PC-3 (cell line): ENCODE measurements at regions of chr14 and their contacts with region 1.

Region 1: DNA sequence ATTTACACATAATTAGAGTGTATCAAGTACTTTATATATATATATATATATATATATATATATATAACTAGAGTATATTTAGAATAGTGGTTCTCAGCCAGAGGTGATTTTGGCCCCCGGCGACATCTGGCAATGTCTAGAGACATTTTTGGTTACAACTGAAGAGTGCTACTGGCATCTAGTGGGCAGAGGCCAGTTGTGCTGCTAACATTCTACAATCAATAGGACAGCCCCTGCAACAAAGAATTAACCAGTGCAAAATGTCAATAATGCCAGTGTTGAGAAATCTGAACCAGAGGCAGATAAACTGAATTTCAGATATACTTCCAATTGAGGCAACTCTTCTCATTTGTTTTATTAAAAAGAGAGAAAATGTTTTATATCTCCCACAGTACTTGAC is 8.9 kb downstream of the GTF2A1 start:
- DNase-seq: peak; percentile 38
- ATAC-seq: 0 out of 2 replicates have a peak, but pooled peaks have one; percentile 58
- H3K4me3 ChIP-seq: no peak overlapping the region
- H3K27ac ChIP-seq: no peak overlapping the region
- H3K4me1 ChIP-seq: no peaks in the 10 kb centered on the region
- H3K27me3 ChIP-seq: no peaks in the 10 kb centered on the region
- CTCF ChIP-seq: peak; percentile 59

Region 2: DNA sequence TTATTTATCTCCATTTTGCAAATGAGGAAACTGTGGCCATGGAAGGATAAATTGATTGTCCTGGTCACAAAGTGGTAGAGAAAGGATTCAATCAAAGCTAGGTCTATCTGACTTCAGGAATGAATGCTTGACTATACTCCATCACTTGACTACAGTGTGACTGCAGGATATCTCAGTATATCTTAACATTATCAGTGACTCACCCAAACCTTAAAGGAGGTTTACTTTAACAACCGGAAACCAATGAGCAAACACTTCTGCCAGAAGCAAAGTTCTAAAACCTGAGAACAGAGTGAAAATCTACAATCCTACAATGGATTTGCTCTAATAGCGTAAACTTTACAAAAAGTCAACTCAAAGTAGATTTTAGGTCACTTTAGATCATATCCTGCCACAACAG is 547.3 kb before region 1 on chr14:
- CTCF ChIA-PET with region 1: no interaction called
- POLR2A ChIA-PET with region 1: no interaction called
- intact Hi-C with region 1: no loop called
- DNase-seq: peak; percentile 55
- ATAC-seq: peak; percentile 88
- H3K4me3 ChIP-seq: no peak overlapping the region
- H3K27ac ChIP-seq: no peak overlapping the region
- H3K4me1 ChIP-seq: peaks cover 14% of the 10 kb centered on the region
- H3K27me3 ChIP-seq: no peaks in the 10 kb centered on the region
- CTCF ChIP-seq: no peak

Region 3: DNA sequence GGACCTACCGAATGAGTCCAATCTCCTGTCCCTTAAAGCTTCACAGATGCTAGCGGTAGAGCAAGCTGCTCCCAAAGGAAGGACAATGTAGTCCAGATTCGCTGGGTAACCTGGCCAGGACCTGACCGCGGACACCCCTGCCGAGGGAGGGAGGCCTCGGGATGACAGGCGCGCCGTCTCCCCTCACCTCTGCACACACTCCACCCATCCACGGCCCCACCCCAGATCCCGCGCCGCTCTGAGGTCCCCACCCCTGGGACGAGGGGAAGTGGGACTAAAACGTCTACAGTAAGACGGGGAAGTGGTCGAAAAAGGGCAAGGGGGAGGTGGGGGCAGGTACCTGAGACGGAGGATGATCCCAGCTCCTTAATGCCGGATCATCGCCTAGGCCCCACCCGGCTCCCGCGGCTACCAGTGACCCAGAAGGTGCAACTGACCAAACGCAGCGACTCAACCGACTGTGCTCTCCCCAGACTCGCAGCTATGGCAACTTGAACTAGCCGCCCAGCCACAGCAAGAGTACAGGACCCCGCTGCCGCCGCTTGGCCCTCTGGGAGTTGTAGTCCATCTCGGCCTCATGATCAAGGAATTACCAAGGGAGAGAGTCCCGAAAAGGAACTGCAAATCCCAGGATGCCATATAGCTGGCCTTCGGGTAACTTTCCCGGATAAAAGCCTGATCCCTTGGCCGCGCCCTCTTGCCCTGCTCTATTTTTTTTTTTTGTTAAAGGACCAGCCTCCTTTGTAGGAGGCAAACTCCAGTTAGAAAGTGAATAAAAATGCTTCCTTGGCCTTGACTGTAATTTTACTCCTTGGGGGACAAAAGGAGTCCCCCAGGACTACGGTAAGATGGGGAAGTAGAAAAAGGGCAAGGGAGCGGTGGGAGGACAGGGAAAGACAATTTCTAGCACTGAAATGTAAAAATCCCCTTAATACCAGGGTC is 270.3 kb before region 1 on chr14 and contains the start of gene CEP128:
- CTCF ChIA-PET with region 1: no interaction called
- POLR2A ChIA-PET with region 1: no interaction called
- intact Hi-C with region 1: loop called (anchors 5 kb)
- DNase-seq: peak; percentile 98
- ATAC-seq: peak; percentile 98
- H3K4me3 ChIP-seq: peak within 1 kb of the TSS; percentile 91
- H3K27ac ChIP-seq: peak within 1 kb of the TSS; percentile 46
- H3K4me1 ChIP-seq: peaks cover 23% of the 10 kb centered on the region
- H3K27me3 ChIP-seq: no peaks in the 10 kb centered on the region
- CTCF ChIP-seq: no peak
- total RNA-seq, gene CEP128: 11.6 and 14.0 TPM in 2 replicates

Region 4: DNA sequence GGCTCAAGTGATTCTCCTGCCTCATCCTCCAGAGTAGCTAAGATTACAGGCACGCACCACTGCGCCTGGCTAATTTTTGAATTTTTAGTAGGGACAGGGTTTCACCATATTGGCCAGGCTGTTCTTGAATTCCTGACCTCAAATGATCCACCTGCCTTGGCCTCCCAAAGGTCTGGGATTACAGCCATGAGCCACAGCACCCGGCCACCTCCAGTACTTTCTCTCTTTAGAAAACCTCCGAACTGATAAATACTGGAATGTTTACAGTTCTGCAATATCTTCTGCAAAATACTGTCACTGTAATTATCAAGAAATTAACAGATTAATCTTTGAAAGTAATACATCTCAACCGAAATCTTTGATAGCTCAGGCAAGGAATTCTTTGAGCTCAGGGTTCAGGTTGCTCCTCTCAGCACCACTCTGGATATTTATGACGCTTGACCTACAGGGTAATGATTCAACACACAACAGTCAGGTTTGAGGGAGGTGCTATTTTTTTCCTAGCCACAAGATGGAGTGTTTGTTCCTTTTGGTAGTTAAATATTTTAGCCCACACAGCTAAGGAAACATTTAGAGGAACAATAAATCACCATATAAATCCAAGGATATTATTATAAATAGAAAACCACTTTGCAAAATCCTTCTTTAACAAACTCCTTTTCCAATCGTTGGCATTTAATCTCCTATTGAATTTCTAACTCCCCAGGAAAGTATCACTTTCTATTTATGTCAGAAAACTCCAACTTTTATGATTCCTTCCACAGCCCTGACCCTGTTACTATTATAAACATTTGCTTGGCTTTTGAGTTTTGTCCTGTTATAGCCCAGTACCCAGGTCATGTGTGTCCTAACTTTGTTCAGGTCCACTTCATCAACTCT is 57.5 kb after region 1 on chr14:
- CTCF ChIA-PET with region 1: no interaction called
- POLR2A ChIA-PET with region 1: no interaction called
- intact Hi-C with region 1: no loop called
- DNase-seq: peak; percentile 90
- ATAC-seq: peak; percentile 78
- H3K4me3 ChIP-seq: no peak overlapping the region
- H3K27ac ChIP-seq: no peak overlapping the region
- H3K4me1 ChIP-seq: peaks cover 32% of the 10 kb centered on the region
- H3K27me3 ChIP-seq: no peaks in the 10 kb centered on the region
- CTCF ChIP-seq: peak; percentile 90

Region 5: DNA sequence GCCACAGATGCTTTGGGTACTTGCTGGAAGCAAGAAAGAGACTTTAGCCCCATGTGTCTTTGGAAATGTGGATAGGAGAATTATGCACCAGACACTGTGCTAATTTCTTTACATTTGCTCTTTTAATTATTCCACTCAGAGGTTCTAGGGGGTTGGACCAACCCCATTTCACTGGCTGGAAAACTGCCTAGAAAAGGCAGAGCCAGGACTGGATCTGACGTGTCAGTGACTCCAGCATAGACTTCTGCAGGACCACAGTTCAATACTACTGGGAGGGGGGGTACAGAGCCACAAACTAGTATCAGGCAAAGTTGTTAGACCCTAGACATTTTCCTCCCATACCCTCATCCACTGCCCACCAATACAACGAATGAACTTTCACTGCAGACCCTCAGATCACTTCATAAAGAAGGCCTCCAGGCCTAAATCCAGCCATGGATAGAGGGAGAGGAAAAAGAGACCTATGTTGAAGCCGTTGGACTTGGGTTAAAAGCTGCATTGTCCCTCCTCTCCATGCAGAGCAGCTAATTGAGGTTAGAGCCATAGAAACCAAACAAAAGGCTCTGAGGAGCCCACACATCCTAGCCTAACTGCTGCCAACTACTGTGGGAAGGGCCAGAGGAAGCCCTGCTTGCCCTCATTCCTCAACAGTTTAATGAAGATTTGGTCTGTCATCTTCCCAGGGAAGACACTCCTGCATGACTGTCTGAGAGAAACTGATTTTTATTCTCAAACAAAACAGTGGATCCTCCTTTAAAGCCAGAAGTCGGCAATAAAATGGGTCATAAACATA is 119.6 kb after region 1 on chr14:
- CTCF ChIA-PET with region 1: no interaction called
- POLR2A ChIA-PET with region 1: no interaction called
- intact Hi-C with region 1: no loop called
- DNase-seq: no peak
- ATAC-seq: peak; percentile 54
- H3K4me3 ChIP-seq: no peak overlapping the region
- H3K27ac ChIP-seq: no peak overlapping the region
- H3K4me1 ChIP-seq: peaks cover 5% of the 10 kb centered on the region
- H3K27me3 ChIP-seq: no peaks in the 10 kb centered on the region
- CTCF ChIP-seq: no peak